ENCODE measurements at regions of chr9 and their contacts with region 1.

Region 1: DNA sequence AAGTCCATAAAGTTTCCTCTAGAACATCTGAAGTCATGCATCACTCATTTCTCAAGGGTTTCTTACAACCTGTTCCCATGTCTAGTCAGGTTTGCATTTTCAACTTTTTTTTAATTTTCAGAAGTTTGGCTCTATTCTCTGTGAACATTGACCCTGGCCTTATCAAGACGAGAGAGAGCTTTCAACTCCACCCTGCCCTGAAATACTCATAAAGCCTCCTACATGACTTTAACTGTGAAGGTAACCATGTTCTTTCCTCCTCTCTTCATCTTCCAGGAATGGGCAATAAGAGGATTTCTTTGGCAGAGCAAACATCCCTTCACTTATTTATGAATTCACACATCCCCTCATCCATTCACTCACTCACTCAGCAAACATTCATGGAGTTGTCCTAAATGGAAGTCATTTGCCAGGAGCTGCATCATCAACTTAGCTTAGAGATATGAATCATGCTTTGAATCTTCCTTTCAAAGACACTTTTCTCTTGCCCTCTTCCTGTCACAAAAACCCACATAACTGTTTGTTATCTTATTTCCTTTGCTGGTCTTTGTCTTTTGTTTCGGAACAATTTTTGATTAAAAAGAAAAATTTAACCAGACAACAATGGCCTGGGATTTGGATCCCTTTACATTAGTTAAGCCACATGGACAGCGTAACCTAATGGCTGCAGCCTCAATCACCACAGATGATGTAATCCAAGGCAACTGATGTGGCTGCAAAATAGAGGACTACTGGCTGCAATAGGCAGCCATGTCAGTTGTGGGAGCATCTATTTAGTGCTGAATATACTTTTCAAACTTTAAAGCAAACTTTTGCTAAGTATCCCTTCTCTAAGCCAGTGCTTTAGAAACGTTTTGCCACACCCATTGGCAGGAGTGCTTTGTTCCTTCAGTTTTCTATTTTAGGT is 43.0 kb upstream of the GNAQ start:
- DNase-seq: no peak
- CTCF ChIP-seq: no peak

Region 2: GRCh38 chr9:77802515-77803293 is 271.9 kb before region 1 on chr9:
- in situ Hi-C with region 1: no loop called
- DNase-seq: no peak
- CTCF ChIP-seq: no peak

Region 3: DNA sequence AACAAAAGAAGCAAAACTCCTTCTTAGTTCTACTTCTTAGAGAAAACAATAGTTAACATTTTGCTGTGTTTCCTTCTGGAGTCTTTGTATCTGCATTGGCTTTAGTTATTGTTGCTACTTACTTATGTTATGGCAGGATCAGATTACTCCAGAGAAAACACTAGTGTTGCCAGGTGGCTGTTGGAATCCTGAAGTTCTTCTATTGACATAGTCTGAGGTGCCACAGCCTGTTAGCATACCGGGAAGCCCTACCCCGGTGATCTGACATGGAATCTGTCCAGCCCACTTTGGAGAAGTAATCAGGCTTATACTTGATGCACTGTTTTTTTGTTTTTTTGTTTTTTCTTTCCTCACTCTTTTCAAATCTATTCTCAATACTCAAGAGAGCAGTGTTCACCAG is 92.7 kb after region 1 on chr9:
- in situ Hi-C with region 1: loop called (anchors 25 kb)
- DNase-seq: no peak
- CTCF ChIP-seq: no peak

Measured in GM13976 (cell line).